Stomach (tissue), 19 donors: ENCODE measurements at regions of chr10 and their contacts with region 1.

Region 1: DNA sequence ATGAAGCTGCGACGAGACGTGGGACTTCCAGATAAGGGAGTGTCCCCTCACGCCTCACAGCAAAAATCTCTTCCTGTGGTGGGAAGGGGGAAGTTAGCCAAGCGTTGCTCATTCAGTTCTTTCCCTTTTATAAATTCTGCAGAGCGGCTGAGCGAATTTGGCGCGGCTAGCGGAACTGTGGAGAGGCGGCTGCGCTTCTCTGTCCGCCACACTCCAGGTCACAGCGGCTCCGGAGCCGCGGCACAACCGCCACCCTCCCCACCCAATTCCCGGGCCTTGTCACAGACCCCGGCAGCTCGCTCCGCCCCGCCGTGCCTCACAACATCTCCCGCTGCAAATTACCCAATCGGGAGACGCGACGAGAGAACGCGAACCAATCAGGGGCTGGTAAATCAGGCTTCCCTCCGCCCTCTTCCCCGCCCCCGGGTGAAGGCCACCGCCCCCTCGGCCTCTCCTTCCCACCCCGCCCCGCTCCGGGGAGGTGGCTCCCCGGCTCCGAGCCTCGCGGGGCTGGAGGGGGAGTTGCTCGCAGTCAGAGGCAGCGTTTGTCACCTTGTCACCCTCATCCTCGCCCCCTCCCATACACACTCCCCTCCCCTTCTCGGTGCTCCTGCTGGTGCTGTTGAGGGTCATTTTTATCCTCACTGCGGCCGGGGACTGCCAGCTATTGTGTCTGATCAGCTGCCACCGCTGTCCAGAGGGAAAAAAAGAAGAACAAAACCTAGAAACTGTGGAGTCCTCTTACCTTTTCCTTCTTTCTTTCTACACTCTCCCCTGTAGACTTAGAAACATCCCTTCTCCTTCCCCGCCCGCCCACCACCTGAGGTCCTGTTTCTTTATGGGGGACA is 918 bp upstream of the ARHGAP21 start:
- DNase-seq: peak; percentile 98 to 99
- H3K4me3 ChIP-seq: peak overlapping the region; percentile 70 to 86 (median 72)
- H3K27ac ChIP-seq: peak overlapping the region; percentile 96 to 100 (median 98)
- H3K4me1 ChIP-seq: peaks cover 0 to 36% (median 20%) of the 10 kb centered on the region in 4 donors
- H3K27me3 ChIP-seq: no peaks in the 10 kb centered on the region
- CTCF ChIP-seq: peak in 1 of 7 experiments; percentile 3
- EP300 ChIP-seq: no peak
- POLR2A ChIP-seq: peak in 2 of 4 donors; percentile 80 to 87

Region 2: GRCh38 chr10:24642622-24643417 is 81.8 kb before region 1 on chr10:
- intact Hi-C with region 1: loop called (anchors 10 kb)
- DNase-seq: peak in 1 of 2 donors; percentile 87
- H3K4me3 ChIP-seq: no peak overlapping the region
- H3K27ac ChIP-seq: peak overlapping the region in 3 of 5 donors; percentile 1 to 43 (median 40)
- H3K4me1 ChIP-seq: peaks cover 0 to 43% (median 20%) of the 10 kb centered on the region in 4 donors
- H3K27me3 ChIP-seq: no peaks in the 10 kb centered on the region
- CTCF ChIP-seq: peak in 5 of 7 experiments; percentile 56 to 85 (median 71)
- EP300 ChIP-seq: no peak
- POLR2A ChIP-seq: no peak